ENCODE measurements at regions of chr2 and their contacts with region 1.

Region 1: DNA sequence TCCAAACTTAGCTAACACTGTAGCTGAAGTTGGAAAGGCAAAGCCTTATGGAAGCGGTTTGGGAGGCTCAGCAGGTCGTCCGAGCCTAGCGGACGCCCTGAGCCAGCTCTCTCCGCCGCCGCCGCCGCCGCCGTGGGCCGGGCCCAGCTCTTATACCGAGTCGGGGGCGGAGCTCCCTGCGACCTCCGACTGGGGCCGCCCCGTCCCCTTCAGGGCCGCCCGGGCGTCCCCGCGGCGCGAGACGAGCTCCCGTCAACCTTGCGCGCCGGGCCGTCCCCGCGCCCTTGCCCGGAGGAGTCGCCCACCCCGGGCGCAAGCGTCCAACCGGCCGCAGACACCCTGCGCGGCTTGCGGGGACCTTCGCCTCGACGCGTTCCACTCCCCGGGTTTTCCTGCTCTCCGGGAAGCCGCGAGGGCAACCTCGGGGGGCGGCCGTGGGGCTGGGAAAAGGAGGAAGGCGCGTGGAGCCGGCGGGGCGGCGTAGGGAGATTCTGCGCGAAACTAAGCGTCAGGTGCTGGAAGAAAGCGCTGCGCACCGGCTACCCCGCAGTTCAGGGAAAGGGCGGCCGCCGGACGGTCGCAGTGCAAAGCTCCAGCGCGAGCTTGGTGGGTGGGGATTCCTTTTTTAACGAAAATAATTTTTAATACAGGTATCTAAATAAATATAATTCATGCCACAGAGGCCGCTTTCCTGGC is at the start of gene SLC40A1:
- DNase-seq: peak; percentile 81 to 92 (median 86)
- H3K4me3 ChIP-seq: peak within 1 kb of the TSS; percentile 66 to 97 (median 86)
- H3K27ac ChIP-seq: peak within 1 kb of the TSS; percentile 84 to 91
- H3K4me1 ChIP-seq: peaks cover 20 to 82% (median 28%) of the 10 kb centered on the region in 4 experiments
- H3K27me3 ChIP-seq: no peaks in the 10 kb centered on the region

Region 2: DNA sequence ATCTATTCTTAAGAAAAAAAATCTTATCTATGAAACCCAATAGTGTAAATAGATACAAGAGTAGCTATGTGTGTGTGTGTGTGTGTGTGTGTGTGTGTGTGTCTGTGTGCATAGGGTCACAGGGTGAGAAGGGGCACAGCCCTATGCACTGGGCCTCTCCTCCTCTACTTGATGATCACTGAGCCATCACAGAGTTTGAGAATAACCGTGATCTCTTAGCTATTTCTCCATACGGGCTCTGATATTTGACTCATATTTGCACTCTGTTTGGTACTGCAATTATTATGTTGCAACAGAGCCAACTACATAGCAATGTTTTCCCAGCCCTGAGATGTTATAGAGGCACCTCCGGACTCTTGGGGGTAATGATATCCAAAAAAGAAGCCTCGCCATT is 28.6 kb after region 1 on chr2:
- CTCF ChIA-PET with region 1: interaction called, 7 read pairs
- POLR2A ChIA-PET with region 1: interaction called, 12 read pairs
- DNase-seq: no peak
- H3K4me3 ChIP-seq: no peak overlapping the region
- H3K27ac ChIP-seq: no peak overlapping the region
- H3K4me1 ChIP-seq: peaks cover 3 to 59% (median 26%) of the 10 kb centered on the region in 4 experiments
- H3K27me3 ChIP-seq: no peaks in the 10 kb centered on the region

Measured in common myeloid progenitor, CD34-positive (primary cell).